K562 (cell line): ENCODE measurements at regions of chr19 and their contacts with region 1.

Region 1: DNA sequence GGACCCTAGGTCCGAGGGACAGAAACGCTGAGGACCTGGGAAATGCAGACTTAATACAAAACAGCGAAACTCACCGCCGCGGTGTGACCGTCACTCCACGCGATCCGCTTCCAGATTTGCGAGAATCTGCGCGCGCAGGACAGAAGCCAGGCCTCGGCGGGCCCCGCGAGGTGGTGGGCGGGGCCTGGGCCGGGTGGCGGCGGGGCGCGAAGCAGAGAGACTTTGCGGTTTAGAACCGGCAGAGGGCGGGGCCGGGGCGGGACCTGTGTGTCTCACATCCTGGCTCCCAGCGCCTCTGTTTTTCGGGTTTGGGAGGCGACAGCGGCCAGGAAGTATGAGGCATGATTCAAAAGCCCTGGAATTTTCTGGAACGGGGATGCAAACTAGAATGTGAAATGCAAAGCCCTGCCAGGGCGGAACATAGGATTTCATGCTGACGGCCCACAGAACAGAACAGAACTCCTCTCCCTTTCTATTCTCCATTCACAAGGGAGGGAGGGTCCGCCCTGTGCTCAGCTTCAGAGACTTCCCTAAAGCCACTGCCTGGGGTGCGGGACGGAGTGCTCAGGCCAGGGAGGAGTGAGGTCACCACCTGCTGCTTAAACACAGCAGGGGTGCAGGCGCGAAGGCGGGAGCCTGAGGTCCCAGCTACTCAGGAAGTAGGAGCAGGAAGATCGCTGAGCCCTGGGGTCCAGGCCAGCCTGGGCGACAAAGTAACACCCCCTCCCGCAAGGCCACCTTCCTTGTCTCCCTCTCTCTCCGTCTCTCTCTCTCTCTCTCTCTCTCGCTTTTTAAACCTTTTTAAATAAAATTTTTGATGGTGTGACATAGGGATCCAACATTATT is 44.3 kb downstream of the ZNF611 start:
- DNase-seq: peak; percentile 92 to 96 (median 94)
- ATAC-seq: peak; percentile 95
- H3K4me3 ChIP-seq: peak overlapping the region; percentile 60
- H3K27ac ChIP-seq: peak overlapping the region; percentile 94
- H3K4me1 ChIP-seq: peaks cover 22 to 39% of the 10 kb centered on the region in 2 experiments
- H3K27me3 ChIP-seq: no peaks in the 10 kb centered on the region
- CTCF ChIP-seq: no peak
- EP300 ChIP-seq: no peak
- POLR2A ChIP-seq: peak; percentile 86
- RAD21 ChIP-seq: peak in 1 of 2 experiments; percentile 38; a peak in 1 of 4 replicates

Region 2: GRCh38 chr19:52527134-52527955 is 163.2 kb before region 1 on chr19 and contains the start of gene ZNF808:
- CTCF ChIA-PET with region 1: no interaction called
- POLR2A ChIA-PET with region 1: no interaction called
- in situ Hi-C with region 1: no loop called
- intact Hi-C with region 1: loop called (anchors 10 kb)
- DNase-seq: peak; percentile 89 to 95 (median 90)
- ATAC-seq: peak; percentile 96
- H3K4me3 ChIP-seq: peak within 1 kb of the TSS; percentile 61
- H3K27ac ChIP-seq: peak within 1 kb of the TSS; percentile 84
- H3K4me1 ChIP-seq: peaks cover 3 to 10% of the 10 kb centered on the region in 2 experiments; a peak in 2 of 5 replicates
- H3K27me3 ChIP-seq: no peaks in the 10 kb centered on the region
- CTCF ChIP-seq: peak; percentile 80 to 97 (median 82)
- EP300 ChIP-seq: peak; percentile 12; the same call in 1 of the 2 replicates
- POLR2A ChIP-seq: peak; percentile 81
- RAD21 ChIP-seq: peak in 1 of 2 experiments; percentile 70; a peak in 2 of 4 replicates
- polyA plus RNA-seq, gene ZNF808: 3.1 to 3.4 TPM

Region 3: DNA sequence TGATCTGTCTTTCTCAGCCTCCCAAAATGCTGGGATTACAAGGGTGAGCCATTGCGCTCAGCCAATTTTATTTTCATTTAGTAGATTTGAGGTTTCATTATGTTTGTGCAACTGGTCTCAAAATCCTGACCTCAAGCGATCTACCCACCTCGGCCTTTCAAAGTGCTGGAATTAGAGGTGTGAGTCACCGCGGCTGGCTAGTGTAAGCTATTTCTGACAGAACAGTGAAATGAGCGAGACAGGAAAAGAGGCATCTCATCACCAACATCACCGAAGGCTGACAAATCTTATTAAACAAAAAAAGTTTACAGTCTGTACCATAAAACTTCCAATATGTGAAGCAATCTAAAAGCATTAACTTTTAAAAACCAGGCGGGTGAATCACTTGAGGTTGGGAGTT is 244.8 kb after region 1 on chr19:
- CTCF ChIA-PET with region 1: no interaction called
- POLR2A ChIA-PET with region 1: no interaction called
- in situ Hi-C with region 1: no loop called
- intact Hi-C with region 1: no loop called
- DNase-seq: peak in 1 of 4 experiments; percentile 76
- ATAC-seq: peak; percentile 62
- H3K4me3 ChIP-seq: no peak overlapping the region
- H3K27ac ChIP-seq: peak overlapping the region; percentile 79
- H3K4me1 ChIP-seq: peaks cover 35 to 41% of the 10 kb centered on the region in 2 experiments
- H3K27me3 ChIP-seq: no peaks in the 10 kb centered on the region
- CTCF ChIP-seq: no peak
- EP300 ChIP-seq: no peak; the same call in 1 of the 2 replicates
- POLR2A ChIP-seq: no peak
- RAD21 ChIP-seq: no peak

Region 4: DNA sequence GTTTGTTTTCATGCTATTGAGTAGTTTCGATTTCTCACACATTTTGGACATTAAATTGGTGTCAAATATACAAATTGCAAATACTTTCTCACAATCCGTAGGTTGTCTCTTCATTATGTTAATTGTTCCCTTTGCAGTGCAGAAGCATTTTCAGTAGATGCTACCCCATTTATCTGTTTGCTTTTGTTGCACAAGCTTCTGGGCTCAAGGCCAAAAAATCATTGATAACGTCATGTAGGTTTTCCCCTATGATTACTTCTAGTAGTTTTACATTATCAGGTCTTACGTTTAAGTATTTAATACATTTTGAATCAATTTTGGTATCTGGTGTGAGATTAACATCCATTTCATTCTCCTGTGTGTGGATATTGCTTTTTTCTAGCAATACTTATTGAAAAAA is 482.3 kb after region 1 on chr19:
- CTCF ChIA-PET with region 1: no interaction called
- POLR2A ChIA-PET with region 1: no interaction called
- in situ Hi-C with region 1: no loop called
- intact Hi-C with region 1: no loop called
- DNase-seq: peak in 1 of 4 experiments; percentile 19
- ATAC-seq: no peak
- H3K4me3 ChIP-seq: no peak overlapping the region
- H3K27ac ChIP-seq: no peak overlapping the region
- H3K4me1 ChIP-seq: no peaks in the 10 kb centered on the region
- H3K27me3 ChIP-seq: no peaks in the 10 kb centered on the region
- CTCF ChIP-seq: no peak
- EP300 ChIP-seq: no peak
- POLR2A ChIP-seq: no peak
- RAD21 ChIP-seq: no peak

Region 5: DNA sequence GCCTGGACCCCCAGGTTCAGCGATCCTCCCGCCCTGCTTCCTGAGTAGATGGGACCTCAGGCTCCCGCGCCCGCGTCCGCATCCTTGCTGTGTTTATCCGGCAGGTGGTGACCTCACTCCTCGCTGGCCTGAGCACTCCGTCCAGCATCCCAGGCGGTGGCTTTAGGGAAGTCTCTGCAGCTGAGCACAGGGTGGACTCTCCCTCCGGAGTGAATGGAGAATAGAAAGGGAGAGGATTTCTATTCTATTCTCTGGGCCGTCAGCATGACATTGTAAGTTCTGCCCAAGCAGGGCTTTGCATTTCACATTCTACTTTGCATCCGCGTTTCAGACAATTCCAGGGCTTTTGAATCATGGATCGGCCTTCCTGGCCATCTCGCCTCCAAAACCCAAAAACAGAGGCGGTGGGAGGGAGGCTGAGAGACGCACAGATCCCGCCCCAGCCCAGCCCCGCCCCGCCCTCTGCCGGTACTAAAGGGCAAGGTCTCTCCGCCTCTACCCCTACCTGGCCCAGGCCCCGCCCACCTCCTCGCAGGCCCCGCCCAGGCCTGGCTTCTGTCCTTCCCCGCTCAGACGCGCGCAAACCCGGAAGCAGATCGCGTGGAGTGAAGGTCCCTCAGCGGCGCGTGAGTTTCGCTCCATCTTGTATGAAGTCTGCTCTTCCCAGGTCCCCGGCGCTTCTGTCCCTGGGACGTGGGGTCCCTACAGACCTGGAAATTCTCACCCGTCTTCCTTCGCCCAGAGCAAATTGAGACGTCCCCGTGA is 674.7 kb after region 1 on chr19 and contains the start of gene ZNF525:
- CTCF ChIA-PET with region 1: no interaction called
- POLR2A ChIA-PET with region 1: no interaction called
- in situ Hi-C with region 1: loop called (anchors 5 kb)
- intact Hi-C with region 1: no loop called
- DNase-seq: peak; percentile 83 to 86 (median 84)
- ATAC-seq: peak; percentile 100
- H3K4me3 ChIP-seq: peak within 1 kb of the TSS; percentile 51
- H3K27ac ChIP-seq: peak within 1 kb of the TSS; percentile 74
- H3K4me1 ChIP-seq: peaks cover 0 to 4% of the 10 kb centered on the region in 2 experiments; a peak in 2 of 5 replicates
- H3K27me3 ChIP-seq: no peaks in the 10 kb centered on the region
- CTCF ChIP-seq: no peak
- EP300 ChIP-seq: no peak
- POLR2A ChIP-seq: peak; percentile 64
- RAD21 ChIP-seq: no peak
- polyA plus RNA-seq, gene ZNF525: 1.5 to 2.5 TPM